BJ (cell line): ENCODE measurements at regions of chr9 and their contacts with region 1.

Region 1: GRCh38 chr9:133726401-133727276 is 11.5 kb downstream of the SARDH start:
- DNase-seq: no peak
- H3K4me3 ChIP-seq: no peak overlapping the region
- H3K27me3 ChIP-seq: no peaks in the 10 kb centered on the region; the same call in none of the 2 replicates
- CTCF ChIP-seq: peak; percentile 61

Region 2: GRCh38 chr9:133532937-133533668 is 193.5 kb before region 1 on chr9:
- CTCF ChIA-PET with region 1: interaction called, 33 read pairs
- POLR2A ChIA-PET with region 1: no interaction called
- DNase-seq: no peak
- H3K4me3 ChIP-seq: no peak overlapping the region
- H3K27me3 ChIP-seq: peaks cover 39% of the 10 kb centered on the region
- CTCF ChIP-seq: peak; percentile 64

Region 3: DNA sequence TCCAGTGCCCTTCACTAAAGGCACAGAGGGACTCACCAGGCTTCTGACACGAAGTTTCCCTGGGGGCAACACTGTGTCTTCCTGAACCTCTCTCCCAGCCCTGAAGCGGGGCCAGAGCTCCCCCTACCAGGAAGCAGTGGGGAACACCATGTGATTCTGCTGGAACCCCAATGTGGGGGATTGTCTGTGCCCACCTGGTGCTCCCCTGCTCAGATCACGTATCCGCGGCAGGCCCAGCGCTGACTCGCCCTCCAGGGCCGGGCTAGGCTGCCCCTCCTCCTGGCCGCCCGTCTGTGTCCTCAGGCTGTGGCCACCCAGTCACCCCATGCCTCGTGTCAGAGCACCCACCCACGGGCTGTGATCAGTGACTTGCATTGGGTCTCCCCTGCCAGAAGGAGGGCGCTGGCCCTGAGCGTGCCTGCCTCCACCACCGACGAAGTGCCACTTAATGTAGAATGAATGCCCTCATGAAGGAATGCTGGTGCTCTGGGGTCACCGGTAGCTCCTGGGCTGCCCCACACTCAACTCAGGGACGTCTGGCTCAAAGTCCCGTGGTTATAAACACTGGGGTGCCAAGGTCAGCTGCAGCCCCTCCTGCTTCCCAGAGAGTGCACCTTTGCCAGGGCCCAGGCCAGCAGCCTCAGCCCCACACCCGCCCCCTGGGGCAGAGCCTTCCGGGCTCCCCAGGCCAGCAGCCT is 10.6 kb before region 1 on chr9:
- CTCF ChIA-PET with region 1: interaction called, 16 read pairs
- POLR2A ChIA-PET with region 1: no interaction called
- DNase-seq: no peak
- H3K4me3 ChIP-seq: no peak overlapping the region
- H3K27me3 ChIP-seq: no peaks in the 10 kb centered on the region; the same call in 1 of the 2 replicates
- CTCF ChIP-seq: peak; percentile 46

Region 4: DNA sequence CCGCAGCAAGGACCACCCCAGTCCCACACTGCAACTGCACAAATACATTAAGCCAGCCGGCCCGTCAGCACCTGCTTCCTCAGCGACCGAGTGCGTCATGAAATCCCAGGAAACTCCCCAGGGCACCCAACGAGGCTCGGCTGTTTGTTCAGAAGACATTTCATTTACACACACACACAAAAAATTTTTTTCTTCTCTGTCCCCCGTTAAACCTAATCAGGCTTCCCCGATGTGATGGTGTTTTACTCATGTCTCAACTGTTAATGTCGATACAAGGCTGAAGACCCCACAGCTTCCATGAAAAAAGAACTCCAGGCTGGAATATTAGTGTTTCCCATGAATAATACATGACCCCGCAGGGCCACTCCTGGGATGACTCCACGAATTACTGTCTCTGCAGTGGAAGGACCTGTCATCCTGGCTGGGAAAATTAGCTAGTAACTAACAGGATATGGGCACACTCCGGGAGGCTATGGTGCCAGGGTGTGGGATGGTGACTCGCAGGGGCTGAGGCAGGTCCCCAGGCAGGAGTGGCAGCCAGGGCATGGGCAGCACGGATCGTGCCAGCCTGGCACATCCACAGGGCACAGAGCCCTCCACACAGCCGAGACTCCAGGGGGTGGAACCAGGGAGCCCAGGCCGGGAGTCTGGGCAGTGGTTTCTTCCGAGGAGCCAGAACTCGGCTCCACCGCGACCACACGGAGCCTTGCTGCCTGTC is 163.1 kb after region 1 on chr9:
- CTCF ChIA-PET with region 1: no interaction called
- POLR2A ChIA-PET with region 1: no interaction called
- DNase-seq: no peak
- H3K4me3 ChIP-seq: no peak overlapping the region
- H3K27me3 ChIP-seq: no peaks in the 10 kb centered on the region
- CTCF ChIP-seq: no peak

Region 5: GRCh38 chr9:133910855-133911514 is 184.3 kb after region 1 on chr9:
- CTCF ChIA-PET with region 1: no interaction called
- POLR2A ChIA-PET with region 1: no interaction called
- DNase-seq: no peak
- H3K4me3 ChIP-seq: no peak overlapping the region
- H3K27me3 ChIP-seq: no peaks in the 10 kb centered on the region
- CTCF ChIP-seq: no peak

Region 6: GRCh38 chr9:133930682-133931485 is 204.2 kb after region 1 on chr9:
- CTCF ChIA-PET with region 1: no interaction called
- POLR2A ChIA-PET with region 1: no interaction called
- DNase-seq: no peak
- H3K4me3 ChIP-seq: no peak overlapping the region
- H3K27me3 ChIP-seq: no peaks in the 10 kb centered on the region
- CTCF ChIP-seq: no peak